ENCODE measurements at regions of chr10 and their contacts with region 1.

Region 1: GRCh38 chr10:6507311-6507710 is 72.8 kb downstream of the PRKCQ start:
- DNase-seq: peak; percentile 72
- ATAC-seq: peak; percentile 93
- H3K4me3 Mint-ChIP-seq: peak overlapping the region; percentile 45
- H3K27ac Mint-ChIP-seq: peak overlapping the region; percentile 94
- H3K4me1 Mint-ChIP-seq: peaks cover 76% of the 10 kb centered on the region
- H3K27me3 Mint-ChIP-seq: no peaks in the 10 kb centered on the region

Region 2: DNA sequence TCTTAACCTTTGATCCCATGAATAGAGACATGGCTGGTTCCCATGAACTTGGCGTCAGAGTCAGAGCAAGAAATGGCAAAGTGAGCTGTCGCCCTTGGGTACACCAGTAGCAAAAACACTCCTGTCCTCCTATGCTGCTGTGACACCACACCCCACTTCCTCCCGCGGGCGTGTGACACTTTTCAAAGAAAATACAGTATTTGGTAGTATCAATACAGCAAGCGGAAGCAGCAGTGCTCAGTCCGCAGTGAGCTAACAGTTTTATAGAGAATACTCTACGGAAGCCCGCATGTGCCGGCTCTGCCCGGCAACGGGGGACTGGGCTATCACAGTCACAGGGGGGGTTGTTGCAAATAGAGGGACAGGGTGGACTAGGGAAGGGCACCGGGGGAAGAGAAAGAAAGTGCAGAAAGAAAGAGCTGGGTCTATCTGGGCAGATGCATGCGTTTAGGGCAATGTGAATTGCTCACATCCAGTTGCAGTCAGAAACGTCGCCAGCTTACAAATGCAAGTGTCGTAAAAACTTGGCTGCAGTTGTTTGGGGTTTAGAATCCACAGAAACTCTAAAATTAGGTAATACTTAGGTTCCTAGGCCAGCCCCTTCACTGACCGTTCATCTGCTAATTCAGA is 23.0 kb after region 1 on chr10:
- CTCF ChIA-PET with region 1: interaction called, 4 read pairs
- POLR2A ChIA-PET with region 1: interaction called, 9 read pairs
- intact Hi-C with region 1: loop called in 1 of 2 experiments (anchors 1 kb)
- DNase-seq: peak; percentile 88
- ATAC-seq: peak; percentile 93
- H3K4me3 Mint-ChIP-seq: peak overlapping the region; percentile 78
- H3K27ac Mint-ChIP-seq: peak overlapping the region; percentile 98
- H3K4me1 Mint-ChIP-seq: peaks cover 79% of the 10 kb centered on the region
- H3K27me3 Mint-ChIP-seq: no peaks in the 10 kb centered on the region